ENCODE measurements at regions of chr10 and their contacts with region 1.

Region 1: GRCh38 chr10:118046395-118047156 is at the start of gene RAB11FIP2:
- DNase-seq: peak; percentile 97
- ATAC-seq: peak; percentile 94
- H3K4me3 Mint-ChIP-seq: peak within 1 kb of the TSS; percentile 84
- H3K27ac Mint-ChIP-seq: peak within 1 kb of the TSS; percentile 88
- H3K4me1 Mint-ChIP-seq: peaks cover 28% of the 10 kb centered on the region
- H3K27me3 Mint-ChIP-seq: no peaks in the 10 kb centered on the region
- total RNA-seq, gene RAB11FIP2: 9.7 to 12.5 TPM

Region 2: DNA sequence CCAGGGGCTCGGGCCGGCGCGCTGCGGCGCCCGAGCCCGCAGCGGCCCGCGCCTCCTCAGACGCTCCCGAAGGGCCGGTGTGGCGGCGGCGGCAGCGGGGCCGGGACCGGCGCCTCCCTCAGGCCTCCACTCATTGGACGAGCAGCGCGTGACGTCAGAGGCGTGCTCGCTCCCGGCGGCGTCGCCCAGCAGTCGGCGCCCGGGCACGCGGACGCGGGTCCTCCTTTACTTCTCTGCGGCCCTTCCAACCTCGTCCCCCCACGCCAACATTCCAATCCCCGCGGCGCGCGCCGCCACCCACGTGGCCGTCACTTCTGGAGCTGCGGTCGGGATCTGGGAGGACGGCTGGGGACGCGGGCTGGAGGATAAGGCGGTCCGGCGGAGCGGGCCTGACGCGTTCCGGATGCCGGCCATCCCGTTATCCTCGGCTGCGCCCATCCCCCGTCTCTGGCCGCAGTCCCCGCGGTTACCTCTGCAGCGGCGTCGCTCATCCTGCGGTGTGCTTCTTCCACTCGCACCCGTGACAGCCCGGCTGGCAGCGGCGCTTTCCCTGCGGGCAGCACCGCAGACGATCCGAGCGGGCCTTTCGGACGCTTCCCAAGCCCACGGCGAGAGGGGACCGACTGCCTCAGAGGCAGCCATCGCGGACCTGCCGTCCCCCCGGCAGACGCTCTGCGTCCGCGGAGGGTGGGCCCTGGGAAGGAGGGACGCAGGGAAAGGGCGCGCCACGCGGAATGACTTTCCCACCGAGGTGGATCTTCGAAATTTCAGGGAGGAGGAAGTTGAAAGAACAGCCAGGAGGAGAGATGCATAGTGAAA is 671.0 kb before region 1 on chr10 and contains the start of gene PDZD8:
- CTCF ChIA-PET with region 1: no interaction called
- POLR2A ChIA-PET with region 1: no interaction called
- intact Hi-C with region 1: loop called in 1 of 2 experiments (anchors 1 kb)
- DNase-seq: peak; percentile 94
- ATAC-seq: peak; percentile 85
- H3K4me3 Mint-ChIP-seq: peak within 1 kb of the TSS; percentile 92
- H3K27ac Mint-ChIP-seq: peak within 1 kb of the TSS; percentile 72
- H3K4me1 Mint-ChIP-seq: peaks cover 29% of the 10 kb centered on the region
- H3K27me3 Mint-ChIP-seq: peaks cover 15% of the 10 kb centered on the region
- total RNA-seq, gene PDZD8: 12.5 to 15.9 TPM

Region 3: GRCh38 chr10:117653170-117653515 is 393.4 kb before region 1 on chr10:
- CTCF ChIA-PET with region 1: no interaction called
- POLR2A ChIA-PET with region 1: no interaction called
- intact Hi-C with region 1: loop called in 1 of 2 experiments (anchors 2 kb)
- DNase-seq: peak; percentile 61
- ATAC-seq: peak; percentile 95
- H3K4me3 Mint-ChIP-seq: no peak overlapping the region
- H3K27ac Mint-ChIP-seq: no peak overlapping the region
- H3K4me1 Mint-ChIP-seq: peaks cover 27% of the 10 kb centered on the region
- H3K27me3 Mint-ChIP-seq: peaks cover 34% of the 10 kb centered on the region

Region 4: GRCh38 chr10:117830787-117831212 is 215.8 kb before region 1 on chr10:
- CTCF ChIA-PET with region 1: no interaction called
- POLR2A ChIA-PET with region 1: no interaction called
- intact Hi-C with region 1: loop called in 1 of 2 experiments (anchors 2 kb)
- DNase-seq: peak; percentile 42
- ATAC-seq: peak; percentile 69
- H3K4me3 Mint-ChIP-seq: peak overlapping the region; percentile 42
- H3K27ac Mint-ChIP-seq: peak overlapping the region; percentile 65
- H3K4me1 Mint-ChIP-seq: peaks cover 25% of the 10 kb centered on the region
- H3K27me3 Mint-ChIP-seq: no peaks in the 10 kb centered on the region

Region 5: DNA sequence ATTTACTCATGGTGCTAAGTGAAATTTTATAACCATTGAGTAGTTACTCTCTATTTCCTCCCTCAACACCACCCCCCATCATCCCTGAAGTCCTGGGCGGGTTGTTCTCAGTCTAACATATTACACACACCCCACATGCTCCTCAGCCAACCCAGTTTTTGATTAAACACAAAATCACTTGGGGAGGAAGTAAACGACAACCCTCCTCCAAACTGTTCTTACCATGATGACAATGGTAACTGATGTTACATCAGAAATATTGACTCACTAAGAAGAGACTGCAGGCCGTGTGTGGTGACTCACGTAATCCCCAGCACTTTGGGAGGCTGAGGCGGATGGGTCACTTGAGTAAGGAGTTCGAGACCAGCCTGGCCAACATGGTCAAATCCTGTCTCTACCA is 44.0 kb before region 1 on chr10:
- CTCF ChIA-PET with region 1: interaction called, 3 read pairs
- POLR2A ChIA-PET with region 1: no interaction called
- intact Hi-C with region 1: loop called in 1 of 2 experiments (anchors 2 kb)
- DNase-seq: peak; percentile 55
- ATAC-seq: peak; percentile 97
- H3K4me3 Mint-ChIP-seq: no peak overlapping the region
- H3K27ac Mint-ChIP-seq: peak overlapping the region; percentile 83
- H3K4me1 Mint-ChIP-seq: peaks cover 9% of the 10 kb centered on the region
- H3K27me3 Mint-ChIP-seq: no peaks in the 10 kb centered on the region

Region 6: GRCh38 chr10:118076705-118077104 is 30.1 kb after region 1 on chr10:
- CTCF ChIA-PET with region 1: no interaction called
- POLR2A ChIA-PET with region 1: no interaction called
- intact Hi-C with region 1: no loop called
- DNase-seq: no peak
- ATAC-seq: no peak
- H3K4me3 Mint-ChIP-seq: no peak overlapping the region
- H3K27ac Mint-ChIP-seq: no peak overlapping the region
- H3K4me1 Mint-ChIP-seq: no peaks in the 10 kb centered on the region
- H3K27me3 Mint-ChIP-seq: peaks cover 4% of the 10 kb centered on the region

Region 7: DNA sequence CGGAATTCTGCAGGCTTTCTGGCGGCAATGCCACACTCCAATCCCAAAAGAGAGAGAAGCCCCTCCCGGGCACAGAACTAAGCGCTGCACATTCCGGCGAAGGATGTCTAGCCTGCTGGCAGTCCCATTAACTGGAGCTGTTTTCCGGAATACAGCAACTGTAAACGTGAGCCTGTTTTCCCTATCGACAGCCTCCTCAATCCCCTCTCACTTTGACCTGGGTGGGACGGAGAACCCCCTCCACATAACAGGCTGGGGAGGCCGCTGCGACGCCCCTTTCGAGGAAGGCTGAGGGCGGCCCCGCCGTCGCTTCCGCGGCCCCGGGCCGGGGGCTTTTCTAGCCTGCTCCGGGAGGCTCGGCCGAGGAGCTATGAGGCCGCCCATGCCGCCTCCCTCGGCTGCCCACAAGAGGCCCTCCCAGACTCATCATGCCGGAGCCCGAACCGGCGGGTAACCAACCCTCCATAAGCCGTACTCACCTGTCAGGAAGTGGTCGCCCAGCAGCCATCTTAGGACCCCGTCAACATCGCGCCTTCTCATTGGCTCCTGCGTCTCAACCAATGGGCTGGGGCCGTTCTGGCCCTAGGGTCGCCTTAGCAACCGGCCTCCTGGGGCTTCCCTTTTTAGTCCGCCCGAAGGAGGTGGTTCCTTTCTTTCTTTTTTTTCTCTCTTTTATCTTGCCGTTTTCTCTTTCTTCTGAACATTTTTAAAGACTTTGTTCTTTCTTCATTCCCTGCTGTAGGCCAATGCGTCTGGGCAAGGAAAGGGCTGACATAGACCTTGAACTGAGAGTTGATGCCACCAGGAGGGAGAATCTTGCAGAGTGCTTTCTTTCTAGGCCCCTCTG is 295.4 kb after region 1 on chr10 and contains the start of gene FAM204A:
- CTCF ChIA-PET with region 1: no interaction called
- POLR2A ChIA-PET with region 1: no interaction called
- intact Hi-C with region 1: loop called (anchors 1 to 5 kb)
- DNase-seq: peak; percentile 96
- ATAC-seq: peak; percentile 98
- H3K4me3 Mint-ChIP-seq: peak within 1 kb of the TSS; percentile 81
- H3K27ac Mint-ChIP-seq: peak within 1 kb of the TSS; percentile 89
- H3K4me1 Mint-ChIP-seq: peaks cover 37% of the 10 kb centered on the region
- H3K27me3 Mint-ChIP-seq: no peaks in the 10 kb centered on the region
- total RNA-seq, gene FAM204A: 44.1 to 55.8 TPM

Measured in activated CD4-positive, alpha-beta T cell treated with anti-CD3 and anti-CD28 coated beads for 36 hours (primary cell).